Activated CD8-positive, alpha-beta memory T cell treated with anti-CD3 and anti-CD28 coated beads, Interleukin-2, amount 10 ng/mL, durations not matched to agents 7 days and 5 days (primary cell): ENCODE measurements at regions of chr14 and their contacts with region 1.

Region 1: GRCh38 chr14:52729925-52730667 is at the start of gene STYX:
- DNase-seq: peak; percentile 99
- ATAC-seq: peak; percentile 96
- H3K4me3 Mint-ChIP-seq: peak within 1 kb of the TSS; percentile 96
- H3K27ac Mint-ChIP-seq: peak within 1 kb of the TSS; percentile 89
- H3K4me1 Mint-ChIP-seq: peaks cover 27% of the 10 kb centered on the region
- H3K27me3 Mint-ChIP-seq: no peaks in the 10 kb centered on the region
- total RNA-seq, gene STYX: 18.5 to 20.7 TPM

Region 2: DNA sequence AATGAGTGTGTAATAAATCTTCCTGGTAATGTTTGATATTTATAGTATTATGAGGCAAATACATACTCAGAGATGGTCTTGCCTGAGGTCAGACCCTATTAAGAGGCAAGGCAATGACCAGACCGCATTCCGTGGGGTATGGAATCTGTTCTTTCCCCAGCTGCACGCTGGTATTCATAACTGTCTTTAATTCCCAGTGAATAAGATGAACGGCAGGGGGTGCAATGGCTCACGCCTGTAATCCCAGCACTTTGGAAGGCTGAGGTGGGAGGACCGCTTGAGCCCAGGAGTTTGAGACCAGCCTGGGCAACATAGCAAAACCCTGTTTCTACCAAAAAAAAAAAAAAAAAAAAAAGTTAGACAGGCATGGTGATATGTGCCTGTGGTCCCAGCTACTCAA is 79.3 kb before region 1 on chr14:
- CTCF ChIA-PET with region 1: no interaction called
- DNase-seq: no peak
- ATAC-seq: no peak
- H3K4me3 Mint-ChIP-seq: no peak overlapping the region
- H3K27ac Mint-ChIP-seq: no peak overlapping the region
- H3K4me1 Mint-ChIP-seq: no peaks in the 10 kb centered on the region
- H3K27me3 Mint-ChIP-seq: no peaks in the 10 kb centered on the region

Region 3: GRCh38 chr14:52741865-52742264 is 11.8 kb after region 1 on chr14:
- CTCF ChIA-PET with region 1: interaction called, 15 read pairs
- DNase-seq: no peak
- ATAC-seq: peak; percentile 52
- H3K4me3 Mint-ChIP-seq: peak overlapping the region; percentile 71
- H3K27ac Mint-ChIP-seq: peak overlapping the region; percentile 95
- H3K4me1 Mint-ChIP-seq: peaks cover 44% of the 10 kb centered on the region
- H3K27me3 Mint-ChIP-seq: no peaks in the 10 kb centered on the region